Posterior vena cava (tissue), 2 donors: ENCODE measurements at regions of chr5 and their contacts with region 1.

Region 1: DNA sequence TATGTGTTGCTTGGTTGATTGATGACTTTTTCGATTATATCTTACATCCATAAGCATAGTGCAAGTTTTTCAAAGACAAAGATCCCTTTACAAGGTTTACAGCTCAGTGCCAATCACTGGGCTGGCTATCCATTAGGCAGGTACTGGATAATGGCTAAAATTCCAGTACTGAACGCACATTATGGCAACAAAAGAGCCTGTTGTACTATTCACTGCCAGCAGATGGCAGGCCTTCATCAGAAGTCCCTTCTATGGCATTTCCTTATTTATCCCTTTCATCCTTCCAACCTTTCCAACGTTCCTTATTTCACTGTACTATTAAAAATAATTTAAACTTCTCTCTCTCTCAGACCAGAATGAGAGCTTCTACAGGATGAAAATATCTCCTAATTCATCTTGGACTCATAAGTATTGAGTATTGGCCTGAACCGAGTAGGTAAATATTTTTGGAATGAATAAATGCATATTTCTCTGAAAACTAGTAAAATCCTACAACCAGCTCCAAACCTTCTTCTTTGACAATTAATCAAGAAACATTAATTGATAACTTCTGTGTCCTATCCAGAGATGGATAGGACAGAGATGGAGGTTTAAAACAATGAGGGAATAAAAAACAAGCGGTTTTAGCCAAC is 6.7 kb upstream of the WNT8A start:
- DNase-seq: no peak

Region 2: GRCh38 chr5:138111937-138112336 is 34.8 kb after region 1 on chr5:
- intact Hi-C with region 1: loop called in 1 of 2 experiments (anchors 1 kb)
- DNase-seq: no peak

Region 3: GRCh38 chr5:138132543-138132942 is 55.4 kb after region 1 on chr5:
- intact Hi-C with region 1: loop called in 1 of 2 experiments (anchors 2 kb)
- DNase-seq: no peak

Region 4: DNA sequence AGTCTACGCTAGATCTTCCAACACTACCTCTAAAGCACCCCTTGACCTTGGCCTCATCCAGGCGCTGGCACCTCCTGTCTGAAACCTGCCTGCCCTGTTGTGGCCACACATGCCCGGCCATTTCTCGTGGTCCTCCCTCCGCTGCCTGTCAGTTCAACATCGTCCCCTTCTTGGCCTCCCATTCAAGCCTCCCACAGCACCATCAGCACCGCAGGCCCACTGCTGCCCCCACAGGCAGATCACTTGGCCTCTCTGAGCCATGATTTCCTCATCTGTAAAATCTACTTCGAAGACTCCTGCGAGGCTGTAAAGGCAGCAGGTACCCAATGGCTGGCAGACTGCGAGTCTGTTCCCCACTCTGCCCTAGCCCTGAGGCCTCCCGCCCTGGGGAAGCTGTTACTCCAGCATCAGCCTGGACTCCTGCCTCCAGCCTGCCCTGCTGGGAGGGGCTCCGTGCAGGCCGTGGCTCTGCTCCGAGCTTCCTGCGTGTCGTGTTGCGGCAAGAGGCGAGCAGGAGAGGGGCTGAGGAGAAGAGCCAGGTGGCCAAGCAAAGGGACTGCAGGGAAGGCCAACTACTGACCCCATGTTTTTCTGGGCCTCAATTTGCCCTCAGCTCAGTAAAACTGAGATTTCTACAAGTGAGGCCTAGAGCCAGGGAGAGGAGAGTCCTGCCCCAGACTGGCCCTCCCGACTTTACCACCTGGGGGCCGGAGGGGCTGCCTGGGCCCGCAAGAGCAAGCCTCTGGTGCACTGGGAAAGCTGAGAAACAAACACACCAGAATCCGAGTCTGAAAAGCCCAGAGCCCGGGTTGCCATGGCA is 868.5 kb after region 1 on chr5:
- intact Hi-C with region 1: no loop called
- DNase-seq: no peak